Heart left ventricle (tissue), 16 donors: ENCODE measurements at regions of chr3 and their contacts with region 1.

Region 1: GRCh38 chr3:102089904-102090492 is 240.7 kb downstream of the NFKBIZ start:
- DNase-seq: no peak
- ATAC-seq: peak in 3 of 4 donors; percentile 74 to 91 (median 84)
- H3K4me3 ChIP-seq: no peak overlapping the region
- H3K27ac ChIP-seq: peak overlapping the region in 2 of 12 donors; percentile 4 to 45
- H3K4me1 ChIP-seq: peaks cover 0 to 24% (median 8%) of the 10 kb centered on the region in 12 donors
- H3K27me3 ChIP-seq: no peaks in the 10 kb centered on the region
- CTCF ChIP-seq: no peak
- POLR2A ChIP-seq: no peak

Region 2: DNA sequence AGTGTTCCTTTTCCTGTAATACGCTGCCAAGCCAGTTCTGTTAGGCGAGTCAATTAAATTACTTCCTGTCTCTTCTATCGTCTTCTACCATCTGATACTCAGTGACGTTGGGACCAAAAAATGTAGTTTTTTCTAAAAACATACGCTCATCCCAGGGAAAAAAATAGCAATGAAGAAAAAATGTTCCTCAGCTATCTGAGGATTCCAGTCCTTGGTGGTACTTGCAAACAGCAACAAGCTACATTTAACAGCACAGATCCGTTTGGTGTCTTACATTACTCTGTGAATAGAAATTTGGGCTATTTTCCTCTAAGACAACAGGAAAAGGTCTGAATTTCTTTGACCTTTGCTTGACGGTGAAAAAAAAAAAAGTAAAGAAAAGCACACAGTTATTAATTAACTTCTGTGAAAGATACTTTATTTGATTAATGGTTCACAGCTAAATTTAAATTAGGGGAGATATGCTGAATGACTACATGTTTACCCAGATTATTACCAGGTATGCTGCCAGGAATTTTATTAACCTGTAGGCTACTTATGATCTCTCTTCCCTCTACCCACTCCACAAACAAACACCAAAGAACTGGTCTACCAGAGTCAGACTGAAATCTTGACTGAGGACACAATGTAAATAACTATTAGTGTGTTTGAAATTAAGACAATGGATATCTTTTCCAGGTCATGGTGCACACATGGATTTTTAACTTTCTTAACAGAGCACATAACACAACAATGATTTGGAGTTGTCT is 90.5 kb after region 1 on chr3:
- intact Hi-C with region 1: loop called in 1 of 10 experiments (anchors 10 kb)
- DNase-seq: peak in 1 of 5 donors; percentile 24
- ATAC-seq: peak; percentile 42 to 90 (median 79)
- H3K4me3 ChIP-seq: no peak overlapping the region
- H3K27ac ChIP-seq: peak overlapping the region in 11 of 12 donors; percentile 58 to 82 (median 71)
- H3K4me1 ChIP-seq: peaks cover 0 to 48% (median 24%) of the 10 kb centered on the region in 12 donors
- H3K27me3 ChIP-seq: no peaks in the 10 kb centered on the region
- CTCF ChIP-seq: no peak
- POLR2A ChIP-seq: no peak

Region 3: DNA sequence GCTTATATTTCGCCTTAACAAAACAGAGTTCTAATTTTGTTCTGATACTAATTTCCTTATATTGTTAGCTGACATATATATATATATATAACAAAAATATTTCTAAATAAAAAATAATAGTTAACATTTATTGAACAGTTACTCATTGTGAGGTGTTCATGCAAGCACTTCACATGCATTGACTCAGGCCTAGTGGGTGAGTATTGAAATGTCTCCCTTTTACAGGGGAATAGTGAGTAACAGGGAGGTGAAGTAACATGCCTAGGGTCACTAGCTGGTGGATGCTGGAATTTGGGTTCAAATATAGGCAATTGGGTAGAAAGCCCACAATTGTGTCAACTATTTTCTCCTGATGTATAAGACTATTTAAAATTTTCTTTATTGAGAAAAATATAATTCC is 242.2 kb after region 1 on chr3:
- intact Hi-C with region 1: no loop called
- DNase-seq: no peak
- ATAC-seq: no peak
- H3K4me3 ChIP-seq: no peak overlapping the region
- H3K27ac ChIP-seq: no peak overlapping the region
- H3K4me1 ChIP-seq: no peaks in the 10 kb centered on the region
- H3K27me3 ChIP-seq: no peaks in the 10 kb centered on the region
- CTCF ChIP-seq: no peak
- POLR2A ChIP-seq: no peak